ENCODE measurements at regions of chr5 and their contacts with region 1.

Region 1: GRCh38 chr5:162209005-162209605 is 141.5 kb downstream of the GABRG2 start:
- DNase-seq: peak; percentile 24
- ATAC-seq: peak; percentile 100
- H3K4me3 ChIP-seq: no peak overlapping the region
- H3K27ac ChIP-seq: no peak overlapping the region
- H3K4me1 ChIP-seq: no peaks in the 10 kb centered on the region
- H3K27me3 ChIP-seq: no peaks in the 10 kb centered on the region
- CTCF ChIP-seq: peak; percentile 42 to 69 (median 58); a peak in 5 of 6 replicates
- EP300 ChIP-seq: no peak
- POLR2A ChIP-seq: no peak
- RAD21 ChIP-seq: peak; percentile 58

Region 2: GRCh38 chr5:162196351-162196750 is 12.8 kb before region 1 on chr5:
- CTCF ChIA-PET with region 1: interaction called, 33 read pairs
- POLR2A ChIA-PET with region 1: no interaction called
- RAD21 ChIA-PET with region 1: no interaction called
- SMC1A ChIA-PET with region 1: interaction called, 14 read pairs
- in situ Hi-C with region 1: no loop called
- intact Hi-C with region 1: no loop called
- DNase-seq: no peak
- ATAC-seq: no peak
- H3K4me3 ChIP-seq: no peak overlapping the region
- H3K27ac ChIP-seq: no peak overlapping the region
- H3K4me1 ChIP-seq: no peaks in the 10 kb centered on the region
- H3K27me3 ChIP-seq: no peaks in the 10 kb centered on the region
- CTCF ChIP-seq: no peak
- EP300 ChIP-seq: no peak
- POLR2A ChIP-seq: no peak
- RAD21 ChIP-seq: no peak

Region 3: GRCh38 chr5:162221910-162222309 is 12.8 kb after region 1 on chr5:
- CTCF ChIA-PET with region 1: interaction called, 18 read pairs
- POLR2A ChIA-PET with region 1: no interaction called
- RAD21 ChIA-PET with region 1: interaction called, 4 read pairs
- SMC1A ChIA-PET with region 1: interaction called, 12 read pairs
- in situ Hi-C with region 1: no loop called
- intact Hi-C with region 1: no loop called
- DNase-seq: no peak
- ATAC-seq: no peak
- H3K4me3 ChIP-seq: no peak overlapping the region
- H3K27ac ChIP-seq: no peak overlapping the region
- H3K4me1 ChIP-seq: no peaks in the 10 kb centered on the region
- H3K27me3 ChIP-seq: no peaks in the 10 kb centered on the region
- CTCF ChIP-seq: peak in 1 of 3 experiments; percentile 20; a peak in 1 of 6 replicates
- EP300 ChIP-seq: no peak
- POLR2A ChIP-seq: no peak
- RAD21 ChIP-seq: no peak

Region 4: GRCh38 chr5:162227075-162227474 is 18.0 kb after region 1 on chr5:
- CTCF ChIA-PET with region 1: interaction called, 18 read pairs
- POLR2A ChIA-PET with region 1: no interaction called
- RAD21 ChIA-PET with region 1: interaction called, 4 read pairs
- SMC1A ChIA-PET with region 1: interaction called, 12 read pairs
- in situ Hi-C with region 1: no loop called
- intact Hi-C with region 1: no loop called
- DNase-seq: no peak
- ATAC-seq: no peak
- H3K4me3 ChIP-seq: no peak overlapping the region
- H3K27ac ChIP-seq: no peak overlapping the region
- H3K4me1 ChIP-seq: no peaks in the 10 kb centered on the region
- H3K27me3 ChIP-seq: no peaks in the 10 kb centered on the region
- CTCF ChIP-seq: peak in 1 of 3 experiments; percentile 10; a peak in 1 of 6 replicates
- EP300 ChIP-seq: no peak
- POLR2A ChIP-seq: no peak
- RAD21 ChIP-seq: peak; percentile 27; the same call in 1 of the 2 replicates

Region 5: GRCh38 chr5:162248107-162248713 is 39.1 kb after region 1 on chr5:
- CTCF ChIA-PET with region 1: interaction called, 10 read pairs
- POLR2A ChIA-PET with region 1: no interaction called
- RAD21 ChIA-PET with region 1: interaction called, 6 read pairs
- SMC1A ChIA-PET with region 1: interaction called, 5 read pairs
- in situ Hi-C with region 1: no loop called
- intact Hi-C with region 1: no loop called
- DNase-seq: no peak
- ATAC-seq: peak; percentile 72
- H3K4me3 ChIP-seq: no peak overlapping the region
- H3K27ac ChIP-seq: no peak overlapping the region
- H3K4me1 ChIP-seq: no peaks in the 10 kb centered on the region
- H3K27me3 ChIP-seq: no peaks in the 10 kb centered on the region
- CTCF ChIP-seq: peak; percentile 3 to 45 (median 44); a peak in 3 of 6 replicates
- EP300 ChIP-seq: no peak
- POLR2A ChIP-seq: no peak
- RAD21 ChIP-seq: peak; percentile 19; the same call in 1 of the 2 replicates

Region 6: GRCh38 chr5:162288647-162289296 is 79.7 kb after region 1 on chr5:
- CTCF ChIA-PET with region 1: interaction called, 10 read pairs
- POLR2A ChIA-PET with region 1: no interaction called
- RAD21 ChIA-PET with region 1: no interaction called
- SMC1A ChIA-PET with region 1: interaction called, 11 read pairs
- in situ Hi-C with region 1: no loop called
- intact Hi-C with region 1: no loop called
- DNase-seq: peak; percentile 28
- ATAC-seq: peak; percentile 86
- H3K4me3 ChIP-seq: no peak overlapping the region
- H3K27ac ChIP-seq: no peak overlapping the region
- H3K4me1 ChIP-seq: no peaks in the 10 kb centered on the region
- H3K27me3 ChIP-seq: no peaks in the 10 kb centered on the region
- CTCF ChIP-seq: no peak
- EP300 ChIP-seq: peak in 1 of 2 experiments; percentile 42; a peak in 1 of 4 replicates
- POLR2A ChIP-seq: no peak
- RAD21 ChIP-seq: no peak

Region 7: GRCh38 chr5:162956570-162956969 is 747.5 kb after region 1 on chr5:
- CTCF ChIA-PET with region 1: no interaction called
- POLR2A ChIA-PET with region 1: no interaction called
- RAD21 ChIA-PET with region 1: no interaction called
- SMC1A ChIA-PET with region 1: no interaction called
- in situ Hi-C with region 1: no loop called
- intact Hi-C with region 1: no loop called
- DNase-seq: no peak
- ATAC-seq: peak; percentile 61; the same call in 2 of the 3 replicates
- H3K4me3 ChIP-seq: no peak overlapping the region
- H3K27ac ChIP-seq: no peak overlapping the region
- H3K4me1 ChIP-seq: no peaks in the 10 kb centered on the region
- H3K27me3 ChIP-seq: no peaks in the 10 kb centered on the region
- CTCF ChIP-seq: peak in 2 of 3 experiments; percentile 14 to 23; a peak in 1 of 6 replicates
- EP300 ChIP-seq: no peak
- POLR2A ChIP-seq: no peak
- RAD21 ChIP-seq: peak; percentile 32; the same call in 1 of the 2 replicates

Region 8: GRCh38 chr5:163269624-163270023 is 1060.5 kb after region 1 on chr5:
- CTCF ChIA-PET with region 1: interaction called, 3 read pairs
- POLR2A ChIA-PET with region 1: no interaction called
- RAD21 ChIA-PET with region 1: no interaction called
- SMC1A ChIA-PET with region 1: interaction called, 5 read pairs
- in situ Hi-C with region 1: no loop called
- intact Hi-C with region 1: loop called (anchors 5 kb)
- DNase-seq: no peak
- ATAC-seq: peak; percentile 84
- H3K4me3 ChIP-seq: no peak overlapping the region
- H3K27ac ChIP-seq: no peak overlapping the region
- H3K4me1 ChIP-seq: no peaks in the 10 kb centered on the region
- H3K27me3 ChIP-seq: no peaks in the 10 kb centered on the region; a peak in 1 of 4 replicates
- CTCF ChIP-seq: peak in 2 of 3 experiments; percentile 35 to 65; a peak in 4 of 6 replicates
- EP300 ChIP-seq: no peak
- POLR2A ChIP-seq: no peak
- RAD21 ChIP-seq: peak; percentile 77

Measured in GM12878 (cell line).